H1 (cell line): ENCODE measurements at regions of chr3 and their contacts with region 1.

Region 1: DNA sequence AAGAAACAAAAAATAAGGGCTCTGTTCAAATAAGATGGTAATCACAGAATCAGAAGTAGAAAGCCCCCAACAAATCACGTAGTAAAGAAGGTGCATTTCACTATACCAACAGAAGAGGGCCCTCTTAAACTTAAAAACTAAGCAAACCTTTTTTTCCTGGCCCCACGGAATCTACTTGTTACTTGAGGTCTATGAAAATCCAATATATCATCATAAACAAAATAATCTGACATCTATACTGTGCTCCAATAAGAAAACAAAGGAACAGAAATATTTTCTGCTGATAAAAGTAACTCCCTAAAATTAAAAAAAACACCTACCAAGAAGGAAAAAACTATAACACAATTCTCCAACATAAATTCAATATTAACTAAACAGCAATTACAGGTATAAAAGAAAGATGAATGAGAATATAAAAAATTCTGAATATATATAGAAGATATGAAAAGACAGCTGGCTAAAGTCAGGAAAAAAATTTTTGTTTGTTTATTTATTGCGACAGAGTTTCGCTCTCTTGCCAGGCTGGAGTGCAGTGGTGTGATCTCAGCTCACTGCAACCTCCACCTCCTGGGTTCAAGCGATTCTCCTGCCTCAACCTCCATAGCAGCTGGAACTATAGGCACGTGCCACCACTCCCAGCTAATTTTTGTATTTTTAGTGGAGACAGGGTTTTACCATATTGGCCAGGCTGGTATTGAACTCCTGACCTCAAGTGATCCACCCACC is 81.8 kb downstream of the CLASP2 start:
- DNase-seq: no peak
- H3K4me3 ChIP-seq: no peak overlapping the region
- H3K27ac ChIP-seq: no peak overlapping the region
- H3K4me1 ChIP-seq: no peaks in the 10 kb centered on the region
- H3K27me3 ChIP-seq: no peaks in the 10 kb centered on the region
- CTCF ChIP-seq: peak in 2 of 3 experiments; percentile 44 to 58; a peak in 2 of 4 replicates
- EP300 ChIP-seq: no peak
- POLR2A ChIP-seq: no peak
- RAD21 ChIP-seq: peak; percentile 76 to 79

Region 2: GRCh38 chr3:33526787-33527186 is 109.5 kb before region 1 on chr3:
- CTCF ChIA-PET with region 1: no interaction called
- POLR2A ChIA-PET with region 1: no interaction called
- DNase-seq: no peak
- H3K4me3 ChIP-seq: no peak overlapping the region
- H3K27ac ChIP-seq: no peak overlapping the region
- H3K4me1 ChIP-seq: peaks cover 0 to 1% (median 0%) of the 10 kb centered on the region in 4 experiments; a peak in 2 of 7 replicates
- H3K27me3 ChIP-seq: no peaks in the 10 kb centered on the region
- CTCF ChIP-seq: no peak
- EP300 ChIP-seq: no peak
- POLR2A ChIP-seq: no peak
- RAD21 ChIP-seq: no peak

Region 3: GRCh38 chr3:33575311-33575710 is 61.0 kb before region 1 on chr3:
- CTCF ChIA-PET with region 1: no interaction called
- POLR2A ChIA-PET with region 1: no interaction called
- DNase-seq: no peak
- H3K4me3 ChIP-seq: no peak overlapping the region
- H3K27ac ChIP-seq: no peak overlapping the region
- H3K4me1 ChIP-seq: peaks cover 4 to 22% (median 11%) of the 10 kb centered on the region in 4 experiments; a peak in 5 of 7 replicates
- H3K27me3 ChIP-seq: no peaks in the 10 kb centered on the region
- CTCF ChIP-seq: no peak
- EP300 ChIP-seq: no peak
- POLR2A ChIP-seq: no peak
- RAD21 ChIP-seq: no peak

Region 4: DNA sequence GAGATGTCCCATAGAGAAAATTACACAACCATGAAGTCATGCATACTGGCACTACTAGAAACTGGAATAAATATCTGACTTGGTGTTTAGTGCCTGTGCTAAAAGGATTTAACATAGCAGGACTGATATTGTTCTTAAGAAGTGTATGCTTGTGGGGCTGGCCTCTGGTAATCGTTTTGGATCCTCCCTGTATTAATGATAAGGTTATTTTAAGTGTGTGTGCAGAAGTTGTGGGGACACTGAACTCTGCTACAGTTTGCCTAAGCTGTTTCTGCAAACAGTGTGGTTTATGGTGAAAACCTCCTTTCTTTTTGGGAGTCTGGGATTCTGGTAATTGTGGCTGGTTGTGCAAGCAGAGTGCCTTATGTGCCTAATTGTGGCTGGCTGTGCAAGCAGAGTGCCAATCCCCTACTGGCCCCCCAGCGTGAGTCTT is 39.0 kb before region 1 on chr3:
- CTCF ChIA-PET with region 1: no interaction called
- POLR2A ChIA-PET with region 1: no interaction called
- DNase-seq: no peak
- H3K4me3 ChIP-seq: no peak overlapping the region
- H3K27ac ChIP-seq: no peak overlapping the region; the same call in 1 of the 2 replicates
- H3K4me1 ChIP-seq: no peaks in the 10 kb centered on the region
- H3K27me3 ChIP-seq: no peaks in the 10 kb centered on the region
- CTCF ChIP-seq: no peak
- EP300 ChIP-seq: no peak
- POLR2A ChIP-seq: no peak
- RAD21 ChIP-seq: no peak

Region 5: DNA sequence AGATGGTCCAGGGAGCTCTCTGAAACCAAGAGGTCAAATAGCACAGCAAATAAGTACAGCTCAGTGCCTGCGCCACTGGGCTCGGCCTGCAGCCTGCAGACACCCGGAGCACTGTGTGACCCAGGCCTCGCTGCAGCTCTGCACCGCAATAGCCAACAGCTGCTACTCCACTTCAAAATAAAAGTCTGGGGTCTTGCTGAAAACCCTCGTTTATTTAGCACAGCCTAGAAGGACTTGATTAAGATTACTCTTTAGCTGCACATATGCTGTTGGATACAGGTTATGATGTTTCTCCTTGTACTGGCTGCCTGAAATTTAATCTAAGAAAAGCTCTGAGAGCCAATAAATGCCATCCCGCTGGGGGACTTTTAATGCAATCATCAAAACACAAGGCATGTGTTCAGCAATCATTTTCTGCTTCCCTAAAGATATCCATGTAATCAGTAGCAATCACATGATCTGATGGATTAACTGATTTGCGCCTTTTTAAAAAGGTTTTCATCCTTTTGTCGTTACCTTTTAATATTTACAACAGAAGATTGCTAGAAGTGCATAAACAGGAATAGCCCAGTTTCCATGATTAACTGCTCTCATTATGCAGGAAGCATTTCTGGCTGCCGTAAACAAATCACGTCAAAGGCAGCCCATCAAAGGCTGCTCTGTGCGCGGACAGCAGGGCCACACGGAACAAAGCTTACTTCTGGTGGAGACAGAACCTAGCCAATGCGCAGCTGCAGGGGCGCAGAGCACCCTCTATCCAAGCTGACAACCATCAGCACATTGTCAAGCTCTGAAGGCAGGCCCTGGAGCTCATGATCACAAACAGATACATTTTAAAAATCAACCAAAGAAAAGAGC is 22.9 kb after region 1 on chr3:
- CTCF ChIA-PET with region 1: interaction called, 12 read pairs
- POLR2A ChIA-PET with region 1: no interaction called
- DNase-seq: peak in 1 of 2 experiments; percentile 19
- H3K4me3 ChIP-seq: peak overlapping the region; percentile 16 to 51 (median 26); a peak in 6 of 8 replicates
- H3K27ac ChIP-seq: 0 out of 2 replicates have a peak overlapping the region, but pooled peaks have one; percentile 8
- H3K4me1 ChIP-seq: peaks cover 0 to 8% (median 2%) of the 10 kb centered on the region in 4 experiments; a peak in 4 of 7 replicates
- H3K27me3 ChIP-seq: no peaks in the 10 kb centered on the region
- CTCF ChIP-seq: no peak; a peak in 1 of 4 replicates
- EP300 ChIP-seq: no peak
- POLR2A ChIP-seq: no peak
- RAD21 ChIP-seq: 0 out of 4 replicates have a peak, but pooled peaks of 1 of the 2 experiments have one; percentile 6

Region 6: GRCh38 chr3:33773637-33774036 is 137.3 kb after region 1 on chr3:
- CTCF ChIA-PET with region 1: interaction called, 50 read pairs
- POLR2A ChIA-PET with region 1: interaction called, 3 read pairs
- DNase-seq: no peak
- H3K4me3 ChIP-seq: no peak overlapping the region
- H3K27ac ChIP-seq: no peak overlapping the region
- H3K4me1 ChIP-seq: no peaks in the 10 kb centered on the region
- H3K27me3 ChIP-seq: no peaks in the 10 kb centered on the region
- CTCF ChIP-seq: no peak
- EP300 ChIP-seq: no peak
- POLR2A ChIP-seq: no peak
- RAD21 ChIP-seq: no peak

Region 7: GRCh38 chr3:33779751-33780150 is 143.5 kb after region 1 on chr3:
- CTCF ChIA-PET with region 1: interaction called, 50 read pairs
- POLR2A ChIA-PET with region 1: interaction called, 3 read pairs
- DNase-seq: no peak
- H3K4me3 ChIP-seq: no peak overlapping the region
- H3K27ac ChIP-seq: no peak overlapping the region
- H3K4me1 ChIP-seq: no peaks in the 10 kb centered on the region
- H3K27me3 ChIP-seq: no peaks in the 10 kb centered on the region
- CTCF ChIP-seq: no peak
- EP300 ChIP-seq: no peak
- POLR2A ChIP-seq: no peak
- RAD21 ChIP-seq: no peak

Region 8: GRCh38 chr3:33787328-33788009 is 151.2 kb after region 1 on chr3:
- CTCF ChIA-PET with region 1: interaction called, 47 read pairs
- POLR2A ChIA-PET with region 1: interaction called, 4 read pairs
- DNase-seq: peak in 1 of 2 experiments; percentile 72
- H3K4me3 ChIP-seq: 0 out of 8 replicates have a peak overlapping the region, but pooled peaks of 1 of the 4 experiments have one; percentile 3
- H3K27ac ChIP-seq: no peak overlapping the region
- H3K4me1 ChIP-seq: peaks cover 1 to 12% (median 6%) of the 10 kb centered on the region in 4 experiments; a peak in 6 of 7 replicates
- H3K27me3 ChIP-seq: no peaks in the 10 kb centered on the region
- CTCF ChIP-seq: peak; percentile 64 to 85 (median 74); a peak in 3 of 4 replicates
- EP300 ChIP-seq: no peak
- POLR2A ChIP-seq: no peak
- RAD21 ChIP-seq: peak; percentile 86 to 88

Region 9: GRCh38 chr3:34155666-34156065 is 519.4 kb after region 1 on chr3:
- CTCF ChIA-PET with region 1: no interaction called
- POLR2A ChIA-PET with region 1: no interaction called
- DNase-seq: no peak
- H3K4me3 ChIP-seq: no peak overlapping the region
- H3K27ac ChIP-seq: no peak overlapping the region
- H3K4me1 ChIP-seq: no peaks in the 10 kb centered on the region
- H3K27me3 ChIP-seq: no peaks in the 10 kb centered on the region
- CTCF ChIP-seq: no peak
- EP300 ChIP-seq: no peak
- POLR2A ChIP-seq: no peak
- RAD21 ChIP-seq: no peak